Aorta (tissue), 5 donors: ENCODE measurements at regions of chr9 and their contacts with region 1.

Region 1: DNA sequence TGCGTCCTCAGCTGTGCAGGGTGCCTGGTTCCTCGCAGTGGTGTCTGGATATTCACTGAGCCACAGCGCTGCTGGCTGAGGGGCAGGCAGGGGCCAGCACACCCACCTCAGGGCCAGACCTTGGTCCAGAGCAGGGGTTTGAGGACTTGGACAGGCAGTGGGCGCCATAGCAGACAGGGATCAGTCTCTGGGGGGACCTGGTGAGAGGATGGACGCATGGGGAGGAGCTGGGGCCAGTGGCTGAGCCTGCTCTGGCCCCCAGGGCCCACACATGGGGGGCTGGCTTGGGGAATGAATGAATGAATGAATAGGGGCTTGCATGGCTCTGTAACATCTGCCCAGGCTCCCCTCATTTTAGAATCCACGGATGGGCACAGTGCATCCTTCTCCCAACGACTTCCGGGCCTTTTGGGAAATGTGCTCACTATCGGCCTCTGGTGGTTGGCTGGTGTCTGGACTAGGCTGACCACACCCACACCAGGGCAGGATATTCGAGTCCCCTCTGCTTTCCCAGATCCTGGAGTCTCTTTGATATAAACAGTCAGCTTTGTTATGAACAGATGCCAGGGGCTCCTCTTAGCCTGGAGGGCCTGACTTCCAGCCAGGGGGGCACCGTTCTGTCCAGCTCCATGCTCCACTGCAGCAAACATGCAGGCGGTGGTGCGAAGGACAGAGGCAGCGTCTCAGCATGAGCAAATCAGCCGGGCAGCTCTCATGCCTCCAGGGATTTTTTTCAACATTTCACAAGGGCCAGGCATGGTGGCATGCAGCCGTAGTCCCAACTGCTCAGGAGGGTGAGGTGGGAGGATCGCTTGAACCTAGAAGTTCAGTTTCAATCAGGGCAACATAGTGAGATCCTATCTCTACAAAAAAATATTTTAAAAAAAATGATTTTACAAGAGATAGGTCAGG is 62.6 kb downstream of the NEK6 start:
- DNase-seq: peak; percentile 73 to 85
- ATAC-seq: peak; percentile 78
- H3K4me3 ChIP-seq: no peak overlapping the region
- H3K27ac ChIP-seq: no peak overlapping the region
- H3K4me1 ChIP-seq: no peaks in the 10 kb centered on the region
- H3K27me3 ChIP-seq: no peaks in the 10 kb centered on the region

Region 2: DNA sequence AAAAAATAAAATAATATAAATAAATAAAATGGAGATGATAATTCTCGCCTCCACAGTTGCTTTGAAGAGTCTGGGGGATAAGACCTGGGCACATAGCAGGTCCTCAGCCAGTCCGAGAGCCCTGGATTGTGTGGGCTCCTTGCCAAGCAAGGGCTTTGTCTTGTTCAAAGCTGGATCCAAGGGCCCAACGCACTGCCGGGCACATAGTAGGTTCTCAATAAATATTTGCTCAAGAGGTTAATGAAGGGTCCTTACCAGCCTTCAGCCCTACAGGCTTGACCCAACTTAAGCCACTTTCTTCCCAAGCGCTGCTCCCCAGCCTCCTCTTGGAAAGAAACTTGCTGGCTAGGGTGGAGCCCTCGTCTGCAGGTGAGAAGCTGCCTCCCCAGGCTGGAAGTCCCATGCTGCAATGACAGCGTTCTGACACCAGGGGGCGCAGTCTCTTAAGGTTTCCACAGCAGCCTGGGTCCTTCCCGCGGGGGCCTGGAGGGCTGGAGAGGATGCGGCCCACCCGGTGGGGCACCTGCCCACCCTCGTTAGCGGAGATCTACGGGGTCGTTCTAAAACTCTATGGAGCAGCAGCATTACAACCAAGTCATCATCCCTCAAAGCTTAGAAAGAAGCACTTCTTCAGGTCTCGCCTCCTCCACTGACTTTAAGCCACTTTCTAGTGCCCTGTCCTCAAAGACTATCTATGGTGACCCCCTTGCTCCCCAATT is 193.6 kb before region 1 on chr9:
- intact Hi-C with region 1: loop called (anchors 2 to 5 kb)
- DNase-seq: peak; percentile 77 to 91
- ATAC-seq: peak; percentile 70
- H3K4me3 ChIP-seq: no peak overlapping the region
- H3K27ac ChIP-seq: no peak overlapping the region
- H3K4me1 ChIP-seq: peaks cover 0 to 4% of the 10 kb centered on the region in 2 donors
- H3K27me3 ChIP-seq: no peaks in the 10 kb centered on the region